Activated naive CD4-positive, alpha-beta T cell treated with anti-CD3 and anti-CD28 coated beads for 36 hours (primary cell): ENCODE measurements at regions of chr14 and their contacts with region 1.

Region 1: DNA sequence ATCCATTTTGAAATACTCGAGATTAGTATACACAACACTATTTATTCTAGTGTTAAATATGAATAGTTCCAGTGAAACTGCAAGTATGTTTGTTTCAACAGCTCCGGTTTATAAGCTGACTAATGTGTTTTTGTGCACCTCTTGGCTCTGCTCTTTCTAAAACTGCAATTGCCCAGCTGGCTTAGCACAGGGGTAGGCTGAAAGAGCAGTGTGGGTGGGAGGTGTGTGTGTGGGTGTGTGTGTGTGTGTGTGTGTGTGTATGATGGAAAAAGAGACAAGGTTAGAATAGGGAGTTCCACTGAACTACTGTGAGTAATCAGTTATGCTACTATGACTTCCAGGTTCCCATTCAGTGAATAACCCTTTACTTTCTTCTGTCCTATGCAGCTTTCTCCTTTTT is 37.8 kb upstream of the DDHD1 start:
- DNase-seq: peak; percentile 72
- H3K4me3 Mint-ChIP-seq: peak overlapping the region; percentile 41
- H3K27ac Mint-ChIP-seq: peak overlapping the region; percentile 22
- H3K4me1 Mint-ChIP-seq: peaks cover 12% of the 10 kb centered on the region
- H3K27me3 Mint-ChIP-seq: no peaks in the 10 kb centered on the region

Region 2: DNA sequence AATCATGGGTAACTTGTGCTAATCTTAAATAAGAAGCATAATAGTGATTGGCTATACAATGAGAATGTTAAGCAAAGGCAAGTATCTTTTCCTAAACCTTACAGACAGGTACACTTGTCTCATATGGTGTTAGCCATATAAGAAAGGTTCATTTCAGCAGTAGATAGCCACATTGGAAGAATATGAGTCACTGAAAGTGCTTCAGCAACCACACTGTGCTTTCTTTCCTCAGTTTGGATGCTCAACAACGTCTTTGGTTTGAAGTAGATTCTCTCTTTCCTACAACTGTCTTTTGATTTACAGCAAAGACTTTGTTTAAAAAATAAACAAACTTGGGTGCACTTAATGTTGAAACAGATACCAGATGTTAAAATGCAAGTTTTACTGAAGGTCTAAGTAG is 46.7 kb before region 1 on chr14:
- CTCF ChIA-PET with region 1: no interaction called
- intact Hi-C with region 1: loop called (anchors 2 kb)
- DNase-seq: peak; percentile 31
- H3K4me3 Mint-ChIP-seq: no peak overlapping the region
- H3K27ac Mint-ChIP-seq: peak overlapping the region; percentile 18
- H3K4me1 Mint-ChIP-seq: peaks cover 62% of the 10 kb centered on the region
- H3K27me3 Mint-ChIP-seq: no peaks in the 10 kb centered on the region

Region 3: DNA sequence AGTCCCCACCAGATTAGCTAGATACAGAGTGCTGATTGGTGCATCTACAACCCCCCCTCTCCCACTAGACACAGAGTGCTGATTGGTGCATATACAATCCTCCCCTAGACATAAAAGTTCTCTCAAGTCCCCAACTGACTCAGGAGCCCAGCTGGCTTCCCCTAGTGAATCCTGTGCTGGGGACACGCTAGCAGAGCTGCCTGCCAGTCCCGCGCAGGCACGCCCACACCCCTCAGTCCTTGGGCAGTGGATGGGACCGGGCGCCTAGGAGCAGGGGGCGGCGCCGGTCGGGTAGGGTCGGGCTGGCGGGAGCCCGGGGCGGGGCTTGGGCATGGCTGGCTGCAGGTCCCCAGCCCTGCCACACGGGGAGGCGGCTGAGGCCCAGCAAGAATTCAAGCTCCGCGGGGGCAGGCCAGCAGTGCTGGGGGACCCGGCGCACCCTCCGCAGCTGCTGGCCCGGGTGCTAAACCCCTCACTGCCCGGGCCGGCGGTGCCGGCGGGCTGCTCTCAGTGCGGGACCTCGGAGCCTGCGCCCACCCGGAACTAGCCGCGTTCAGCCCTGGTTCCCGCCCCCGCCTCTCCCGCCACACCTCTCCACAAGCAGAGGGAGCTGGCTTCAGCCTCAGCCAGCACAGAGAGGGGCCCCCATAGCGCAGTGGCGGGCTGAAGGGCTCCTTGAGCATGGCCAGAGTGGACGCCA is 26.5 kb after region 1 on chr14:
- CTCF ChIA-PET with region 1: interaction called, 3 read pairs
- intact Hi-C with region 1: loop called (anchors 2 kb)
- DNase-seq: peak; percentile 79
- H3K4me3 Mint-ChIP-seq: peak overlapping the region; percentile 78
- H3K27ac Mint-ChIP-seq: peak overlapping the region; percentile 65
- H3K4me1 Mint-ChIP-seq: peaks cover 8% of the 10 kb centered on the region
- H3K27me3 Mint-ChIP-seq: no peaks in the 10 kb centered on the region

Region 4: DNA sequence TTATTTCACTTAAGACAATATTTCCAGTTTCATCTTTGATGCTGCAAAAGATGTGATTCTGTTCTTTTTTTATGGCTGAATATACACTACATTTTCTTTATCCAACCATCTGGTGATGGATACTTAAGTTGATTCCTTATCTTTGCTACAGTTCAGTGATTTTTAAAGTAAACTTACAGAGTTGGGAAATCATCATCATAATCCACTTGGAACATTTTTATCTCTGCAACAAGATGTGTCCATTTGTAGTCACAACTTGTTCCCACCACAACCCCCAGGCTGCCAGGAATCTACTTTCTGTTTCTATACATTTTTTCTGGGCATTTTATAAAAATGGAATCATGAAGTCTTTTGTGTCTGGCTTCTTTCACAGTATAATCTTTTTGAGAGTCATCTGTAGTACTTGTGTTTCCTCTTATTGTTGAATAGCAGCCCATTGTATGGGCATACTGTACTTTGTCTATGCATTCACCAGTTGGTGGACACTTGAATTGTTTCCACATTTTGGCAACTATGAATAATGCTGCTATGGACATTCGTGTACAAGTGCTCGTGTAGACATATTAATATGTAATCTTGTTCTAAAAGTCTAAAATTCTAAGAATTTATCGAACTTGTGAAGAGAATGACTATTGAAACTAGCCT is 174.7 kb after region 1 on chr14:
- CTCF ChIA-PET with region 1: no interaction called
- intact Hi-C with region 1: no loop called
- DNase-seq: no peak
- H3K4me3 Mint-ChIP-seq: no peak overlapping the region
- H3K27ac Mint-ChIP-seq: no peak overlapping the region
- H3K4me1 Mint-ChIP-seq: no peaks in the 10 kb centered on the region
- H3K27me3 Mint-ChIP-seq: no peaks in the 10 kb centered on the region

Region 5: GRCh38 chr14:54387328-54387727 is 1196.4 kb after region 1 on chr14:
- CTCF ChIA-PET with region 1: no interaction called
- intact Hi-C with region 1: no loop called
- DNase-seq: no peak
- H3K4me3 Mint-ChIP-seq: no peak overlapping the region
- H3K27ac Mint-ChIP-seq: no peak overlapping the region
- H3K4me1 Mint-ChIP-seq: no peaks in the 10 kb centered on the region
- H3K27me3 Mint-ChIP-seq: peaks cover 7% of the 10 kb centered on the region